ENCODE measurements at regions of chr7 and their contacts with region 1.

Region 1: DNA sequence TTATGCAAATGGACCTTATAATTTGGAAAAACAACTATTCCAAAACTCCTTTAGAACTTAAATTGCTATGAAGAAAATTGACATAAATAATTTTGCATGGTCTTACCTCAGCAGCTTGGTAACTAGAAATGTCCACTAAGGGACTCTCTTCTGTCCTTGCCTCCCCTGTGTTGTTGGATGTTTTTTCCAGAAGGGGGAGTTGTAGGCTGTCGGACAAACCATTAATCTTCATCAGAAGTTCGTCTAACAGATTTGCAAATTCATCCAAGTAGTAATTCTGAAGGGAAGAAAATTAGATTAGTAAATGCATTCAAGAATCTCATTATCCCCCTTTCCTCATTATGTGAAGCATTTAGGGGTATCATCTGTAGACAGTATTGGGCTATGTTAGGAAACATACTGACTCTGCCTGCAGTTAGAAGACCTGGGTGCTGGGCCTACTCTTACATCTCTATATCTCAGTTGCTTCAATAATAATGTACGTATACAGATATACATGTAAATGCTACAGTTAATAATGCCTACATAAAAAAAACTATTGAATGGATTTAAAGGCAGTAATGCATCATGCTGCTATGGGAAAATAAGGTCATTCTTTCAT is 155.6 kb downstream of the PKD1L1 start:
- DNase-seq: no peak
- ATAC-seq: peak in 2 of 8 donors; percentile 63 to 73
- H3K4me3 ChIP-seq: no peak overlapping the region
- H3K27ac ChIP-seq: no peak overlapping the region
- H3K4me1 ChIP-seq: no peaks in the 10 kb centered on the region
- H3K27me3 ChIP-seq: no peaks in the 10 kb centered on the region
- CTCF ChIP-seq: peak; percentile 24 to 73 (median 54)

Region 2: GRCh38 chr7:47968847-47969774 is 176.5 kb after region 1 on chr7:
- intact Hi-C with region 1: loop called in 2 of 10 experiments (anchors 10 kb)
- DNase-seq: peak; percentile 64 to 72
- ATAC-seq: peak; percentile 68 to 85 (median 74)
- H3K4me3 ChIP-seq: no peak overlapping the region
- H3K27ac ChIP-seq: peak overlapping the region in 5 of 10 donors; percentile 1 to 67 (median 17)
- H3K4me1 ChIP-seq: peaks cover 0 to 57% (median 21%) of the 10 kb centered on the region in 9 donors
- H3K27me3 ChIP-seq: no peaks in the 10 kb centered on the region
- CTCF ChIP-seq: peak; percentile 68 to 94 (median 89)